ENCODE measurements at regions of chr19 and their contacts with region 1.

Region 1: DNA sequence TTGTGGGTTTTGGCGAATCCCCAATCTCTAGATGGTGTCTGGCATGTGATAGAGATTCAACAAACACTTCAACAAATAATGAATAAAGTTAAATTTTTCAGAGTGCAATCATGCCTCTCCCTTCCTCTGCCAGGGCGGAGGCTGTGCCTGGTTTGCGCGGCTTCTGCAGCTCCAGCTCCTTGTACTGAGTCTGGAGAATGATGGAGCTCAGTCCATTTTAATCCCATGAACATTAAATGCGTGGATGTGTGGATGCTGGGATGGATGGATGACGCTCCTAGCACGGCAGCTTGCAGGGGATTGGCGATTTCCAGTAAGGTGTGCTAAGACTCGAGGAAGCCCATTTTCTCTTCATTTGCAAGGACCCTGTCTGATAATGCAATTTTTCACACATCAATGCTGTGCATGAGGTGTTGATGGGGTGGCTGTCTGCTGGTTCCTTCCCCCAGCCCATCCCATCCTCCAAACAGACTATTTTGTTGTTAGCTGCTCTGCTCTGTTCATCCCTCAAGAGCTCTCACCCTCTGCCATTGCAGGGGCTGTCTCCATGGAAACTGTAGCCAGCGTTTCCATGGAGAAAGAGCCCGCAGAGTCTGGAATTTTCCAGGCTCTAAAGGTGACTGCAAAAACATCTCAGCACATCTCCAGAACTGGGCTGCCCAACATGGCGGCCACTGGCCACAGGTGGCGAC is 92.6 kb upstream of the PEG3 start:
- DNase-seq: no peak
- H3K4me3 ChIP-seq: no peak overlapping the region
- H3K27ac ChIP-seq: no peak overlapping the region
- H3K4me1 ChIP-seq: no peaks in the 10 kb centered on the region
- H3K27me3 ChIP-seq: peaks cover 30% of the 10 kb centered on the region
- CTCF ChIP-seq: no peak

Region 2: GRCh38 chr19:56949628-56950027 is 16.5 kb after region 1 on chr19:
- CTCF ChIA-PET with region 1: no interaction called
- POLR2A ChIA-PET with region 1: interaction called, 12 read pairs
- intact Hi-C with region 1: no loop called
- DNase-seq: no peak
- H3K4me3 ChIP-seq: no peak overlapping the region
- H3K27ac ChIP-seq: no peak overlapping the region
- H3K4me1 ChIP-seq: no peaks in the 10 kb centered on the region
- H3K27me3 ChIP-seq: peaks cover 40% of the 10 kb centered on the region
- CTCF ChIP-seq: no peak

Measured in PC-9 (cell line).